Activated CD4-positive, alpha-beta memory T cell treated with anti-CD3 and anti-CD28 coated beads, Interleukin-2, amount 10 ng/mL, durations not matched to agents 7 days and 5 days (primary cell): ENCODE measurements at regions of chr1 and their contacts with region 1.

Region 1: GRCh38 chr1:117067533-117068370 is 7.6 kb downstream of the TTF2 start:
- DNase-seq: peak; percentile 52
- H3K4me3 Mint-ChIP-seq: no peak overlapping the region
- H3K27ac Mint-ChIP-seq: no peak overlapping the region
- H3K4me1 Mint-ChIP-seq: peaks cover 46% of the 10 kb centered on the region
- H3K27me3 Mint-ChIP-seq: no peaks in the 10 kb centered on the region

Region 2: GRCh38 chr1:116817582-116818064 is 250.1 kb before region 1 on chr1:
- CTCF ChIA-PET with region 1: no interaction called
- POLR2A ChIA-PET with region 1: no interaction called
- DNase-seq: peak; percentile 78
- H3K4me3 Mint-ChIP-seq: no peak overlapping the region
- H3K27ac Mint-ChIP-seq: peak overlapping the region; percentile 53
- H3K4me1 Mint-ChIP-seq: peaks cover 63% of the 10 kb centered on the region
- H3K27me3 Mint-ChIP-seq: no peaks in the 10 kb centered on the region

Region 3: DNA sequence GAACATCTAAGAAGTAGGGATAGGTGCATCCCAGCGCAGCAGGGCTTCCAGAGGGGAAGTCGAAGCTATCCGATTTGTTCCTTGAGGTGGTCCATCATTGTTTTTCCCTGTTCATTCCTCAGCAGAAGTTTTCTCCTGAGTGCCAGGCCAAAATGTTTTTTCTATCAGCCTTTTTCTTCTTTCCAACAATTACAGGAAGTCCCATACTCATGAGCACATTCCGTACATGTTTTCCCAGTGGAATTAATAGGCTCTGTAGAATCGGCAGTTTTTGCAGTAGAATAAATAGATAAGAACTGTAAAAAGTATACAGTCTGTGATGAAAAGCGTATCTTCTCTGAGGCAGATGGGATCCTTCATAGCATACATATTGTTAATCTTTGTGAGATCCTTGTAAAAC is 41.4 kb before region 1 on chr1:
- CTCF ChIA-PET with region 1: no interaction called
- POLR2A ChIA-PET with region 1: no interaction called
- DNase-seq: no peak
- H3K4me3 Mint-ChIP-seq: no peak overlapping the region
- H3K27ac Mint-ChIP-seq: no peak overlapping the region
- H3K4me1 Mint-ChIP-seq: peaks cover 2% of the 10 kb centered on the region
- H3K27me3 Mint-ChIP-seq: peaks cover 2% of the 10 kb centered on the region

Region 4: GRCh38 chr1:117045644-117046043 is 22.1 kb before region 1 on chr1:
- CTCF ChIA-PET with region 1: no interaction called
- POLR2A ChIA-PET with region 1: no interaction called
- DNase-seq: no peak
- H3K4me3 Mint-ChIP-seq: no peak overlapping the region
- H3K27ac Mint-ChIP-seq: no peak overlapping the region
- H3K4me1 Mint-ChIP-seq: peaks cover 14% of the 10 kb centered on the region
- H3K27me3 Mint-ChIP-seq: no peaks in the 10 kb centered on the region

Region 5: DNA sequence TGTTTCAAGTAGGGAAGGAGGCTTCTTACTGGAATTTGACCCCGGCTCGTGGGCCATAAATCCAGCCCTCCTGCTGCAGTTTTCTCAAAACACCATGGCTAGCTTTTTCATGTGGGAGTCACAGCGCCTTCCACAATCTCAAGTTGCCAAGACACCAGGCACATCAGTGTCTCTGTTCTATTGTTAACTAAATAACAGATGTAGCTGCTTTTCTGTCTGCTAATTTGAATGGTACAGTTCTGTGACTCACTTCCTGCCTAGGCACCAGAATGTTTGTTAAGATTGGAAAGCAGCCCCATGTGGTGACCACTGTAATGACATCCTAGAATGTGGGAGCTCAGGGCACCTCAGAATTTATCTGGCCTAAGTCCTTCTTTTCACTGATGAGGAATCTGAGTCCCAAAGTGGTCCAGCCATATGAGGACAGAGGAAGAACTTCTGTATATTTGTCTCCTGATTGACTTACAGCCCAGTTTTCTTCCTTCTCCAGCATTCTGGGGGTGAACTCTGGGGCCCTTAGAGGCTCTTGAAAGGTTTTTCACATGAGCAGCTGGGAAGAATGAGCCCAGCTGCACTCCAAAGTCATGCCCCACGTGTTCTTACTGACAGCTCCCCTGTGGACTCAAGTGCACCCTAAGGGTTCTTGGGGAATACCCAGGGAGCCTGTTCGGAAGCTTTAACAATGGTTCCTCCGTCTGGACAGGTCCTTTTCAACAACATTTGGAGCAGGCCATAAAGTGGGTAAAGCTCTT is 26.3 kb after region 1 on chr1:
- CTCF ChIA-PET with region 1: interaction called, 22 read pairs
- POLR2A ChIA-PET with region 1: interaction called, 3 read pairs
- DNase-seq: peak; percentile 55
- H3K4me3 Mint-ChIP-seq: no peak overlapping the region
- H3K27ac Mint-ChIP-seq: peak overlapping the region; percentile 15
- H3K4me1 Mint-ChIP-seq: peaks cover 19% of the 10 kb centered on the region
- H3K27me3 Mint-ChIP-seq: no peaks in the 10 kb centered on the region

Region 6: GRCh38 chr1:117128323-117129079 is 60.7 kb after region 1 on chr1:
- CTCF ChIA-PET with region 1: interaction called, 39 read pairs
- POLR2A ChIA-PET with region 1: interaction called, 3 read pairs
- DNase-seq: no peak
- H3K4me3 Mint-ChIP-seq: no peak overlapping the region
- H3K27ac Mint-ChIP-seq: no peak overlapping the region
- H3K4me1 Mint-ChIP-seq: no peaks in the 10 kb centered on the region
- H3K27me3 Mint-ChIP-seq: peaks cover 17% of the 10 kb centered on the region